Activated CD4-positive, alpha-beta T cell treated with anti-CD3 and anti-CD28 coated beads for 36 hours (primary cell): ENCODE measurements at regions of chr9 and their contacts with region 1.

Region 1: DNA sequence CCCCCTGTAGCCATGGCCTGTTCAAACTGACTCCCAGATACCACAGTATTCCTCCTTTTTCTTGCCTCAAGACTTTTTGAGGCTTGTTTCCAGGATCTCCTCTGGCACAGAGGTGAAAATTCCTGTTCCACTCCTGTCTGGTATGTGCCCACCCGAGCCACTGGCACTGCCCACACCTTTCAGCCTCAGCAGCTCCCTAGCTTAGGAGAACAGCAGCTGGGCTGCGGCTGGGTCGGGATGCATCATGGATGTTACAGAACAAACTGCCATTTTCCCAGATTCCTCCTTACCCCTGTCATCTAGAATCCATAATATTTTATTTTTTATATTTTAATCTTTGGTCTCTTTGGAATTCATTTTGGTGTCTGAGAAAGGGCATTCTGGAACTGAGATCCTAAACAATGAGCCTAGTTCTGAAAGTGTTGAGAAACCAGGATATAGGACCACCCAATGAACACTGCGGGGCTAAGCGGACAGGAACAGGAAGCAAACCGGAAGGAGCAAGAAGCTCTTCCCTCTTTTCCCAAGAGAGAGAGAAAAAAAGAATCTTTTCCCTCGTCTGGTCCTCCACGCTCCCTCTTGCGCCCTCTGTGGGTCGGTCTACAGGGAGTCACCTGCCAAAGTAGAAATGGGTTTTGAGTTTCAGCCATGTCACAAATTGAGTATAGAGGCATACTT is 12.5 kb downstream of the OR2S2 start:
- DNase-seq: peak; percentile 87
- ATAC-seq: peak; percentile 76
- H3K4me3 Mint-ChIP-seq: no peak overlapping the region
- H3K27ac Mint-ChIP-seq: no peak overlapping the region
- H3K4me1 Mint-ChIP-seq: peaks cover 59% of the 10 kb centered on the region
- H3K27me3 Mint-ChIP-seq: no peaks in the 10 kb centered on the region

Region 2: DNA sequence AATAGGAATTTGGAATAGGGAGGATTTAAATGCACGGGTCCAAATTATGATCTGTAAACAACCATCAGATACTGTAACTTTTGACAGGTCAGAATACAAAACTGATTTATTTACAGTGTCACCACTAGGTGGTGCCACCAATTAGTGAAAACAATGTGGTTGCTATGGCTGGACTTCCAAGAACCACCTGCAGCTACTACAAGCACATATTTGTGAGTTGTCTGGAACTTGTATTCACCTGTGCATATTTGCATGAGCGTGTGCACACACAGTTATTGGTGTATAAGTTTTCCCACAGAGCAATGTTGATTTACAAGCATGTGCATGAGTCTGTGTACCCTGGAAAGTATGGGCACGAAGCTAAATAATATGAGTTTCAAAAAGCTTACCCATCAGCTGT is 42.4 kb before region 1 on chr9:
- CTCF ChIA-PET with region 1: interaction called, 69 read pairs
- POLR2A ChIA-PET with region 1: interaction called, 3 read pairs
- intact Hi-C with region 1: loop called (anchors 1 kb)
- DNase-seq: peak; percentile 52
- ATAC-seq: peak; percentile 71
- H3K4me3 Mint-ChIP-seq: no peak overlapping the region
- H3K27ac Mint-ChIP-seq: no peak overlapping the region
- H3K4me1 Mint-ChIP-seq: peaks cover 21% of the 10 kb centered on the region
- H3K27me3 Mint-ChIP-seq: no peaks in the 10 kb centered on the region

Region 3: GRCh38 chr9:35923927-35924763 is 21.3 kb before region 1 on chr9:
- CTCF ChIA-PET with region 1: interaction called, 14 read pairs
- POLR2A ChIA-PET with region 1: no interaction called
- intact Hi-C with region 1: loop called in 1 of 2 experiments (anchors 2 kb)
- DNase-seq: peak; percentile 72
- ATAC-seq: peak; percentile 97
- H3K4me3 Mint-ChIP-seq: no peak overlapping the region
- H3K27ac Mint-ChIP-seq: peak overlapping the region; percentile 53
- H3K4me1 Mint-ChIP-seq: peaks cover 25% of the 10 kb centered on the region
- H3K27me3 Mint-ChIP-seq: no peaks in the 10 kb centered on the region

Region 4: GRCh38 chr9:36008774-36009300 is 63.4 kb after region 1 on chr9:
- CTCF ChIA-PET with region 1: interaction called, 15 read pairs
- POLR2A ChIA-PET with region 1: no interaction called
- intact Hi-C with region 1: no loop called
- DNase-seq: peak; percentile 77
- ATAC-seq: peak; percentile 87
- H3K4me3 Mint-ChIP-seq: no peak overlapping the region
- H3K27ac Mint-ChIP-seq: no peak overlapping the region
- H3K4me1 Mint-ChIP-seq: peaks cover 23% of the 10 kb centered on the region
- H3K27me3 Mint-ChIP-seq: peaks cover 24% of the 10 kb centered on the region